Common myeloid progenitor, CD34-positive (primary cell): ENCODE measurements at regions of chr16 and their contacts with region 1.

Region 1: DNA sequence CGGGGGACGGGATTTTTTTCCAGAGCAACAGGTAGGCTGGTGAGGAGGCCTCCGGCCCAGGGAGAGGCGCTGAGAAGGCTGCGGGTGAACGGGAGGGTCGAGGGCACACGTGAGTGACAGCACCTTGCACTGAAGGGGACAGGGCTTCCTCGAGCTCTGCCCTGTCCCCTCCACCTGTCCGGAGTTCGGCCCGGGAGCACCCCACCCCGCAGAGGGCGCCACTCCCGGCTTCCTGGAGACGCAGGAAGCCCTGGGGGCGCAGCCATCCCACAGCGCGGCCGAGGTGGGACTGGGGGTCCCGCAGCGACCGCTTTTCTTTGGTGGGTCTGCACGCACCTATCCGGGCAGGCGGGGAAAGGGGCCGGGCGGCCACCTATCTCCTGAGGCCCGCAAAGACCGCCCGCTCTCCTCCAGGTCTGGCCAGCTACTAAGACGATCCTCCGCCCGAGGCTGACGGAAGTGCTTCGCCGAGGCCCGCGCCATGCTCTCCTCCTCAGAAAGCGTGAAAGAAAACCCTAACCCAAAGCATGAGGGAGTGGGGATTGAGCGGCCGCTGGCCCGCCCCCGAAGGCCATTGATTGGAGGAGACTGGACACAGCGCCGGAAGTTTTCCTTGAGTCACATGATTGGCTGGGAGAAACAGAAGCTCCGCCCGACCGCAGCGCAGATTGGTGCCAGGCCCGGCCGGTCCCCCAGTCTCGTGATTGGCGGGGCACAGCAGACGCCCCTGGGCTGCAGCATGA is 34.3 kb downstream of the DDX19A start:
- DNase-seq: peak; percentile 97 to 98 (median 98)
- H3K4me3 ChIP-seq: peak overlapping the region; percentile 72 to 88 (median 81)
- H3K27ac ChIP-seq: peak overlapping the region; percentile 27 to 74
- H3K4me1 ChIP-seq: peaks cover 7 to 28% (median 25%) of the 10 kb centered on the region in 4 experiments
- H3K27me3 ChIP-seq: no peaks in the 10 kb centered on the region

Region 2: DNA sequence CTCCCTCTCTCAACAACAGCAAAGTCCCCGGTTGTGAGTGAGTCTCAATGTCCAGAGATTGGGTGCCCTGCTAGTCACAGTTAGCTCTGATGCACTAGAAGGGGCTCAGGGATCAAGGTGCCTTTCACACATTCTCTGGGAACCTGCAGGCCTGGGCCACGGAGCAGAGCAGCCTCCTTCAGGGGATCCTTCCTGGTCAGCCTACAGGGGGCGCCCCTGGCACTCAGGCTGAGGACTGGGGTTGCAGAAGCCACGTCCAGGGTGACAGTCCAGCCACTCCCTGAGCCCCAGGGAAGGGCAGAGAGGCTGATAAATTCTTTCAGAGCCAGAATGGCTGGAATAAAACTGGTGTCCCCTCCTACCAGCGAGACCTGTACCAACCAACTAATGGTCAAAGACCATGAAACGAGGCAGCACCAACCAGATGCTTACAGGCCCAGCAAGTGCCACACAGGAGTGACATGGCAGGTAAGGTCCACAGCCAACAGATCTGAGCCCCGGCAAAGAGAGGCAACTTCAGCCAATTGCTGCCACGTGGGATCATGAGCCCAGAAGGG is 14.4 kb after region 1 on chr16:
- CTCF ChIA-PET with region 1: interaction called, 42 read pairs
- POLR2A ChIA-PET with region 1: no interaction called
- DNase-seq: peak; percentile 53 to 67 (median 61)
- H3K4me3 ChIP-seq: no peak overlapping the region
- H3K27ac ChIP-seq: no peak overlapping the region
- H3K4me1 ChIP-seq: no peaks in the 10 kb centered on the region
- H3K27me3 ChIP-seq: no peaks in the 10 kb centered on the region

Region 3: GRCh38 chr16:70454222-70455034 is 73.4 kb after region 1 on chr16 and contains the start of gene FCSK:
- CTCF ChIA-PET with region 1: interaction called, 10 read pairs
- POLR2A ChIA-PET with region 1: no interaction called
- DNase-seq: peak; percentile 73 to 86 (median 76)
- H3K4me3 ChIP-seq: peak within 1 kb of the TSS; percentile 81 to 93 (median 87)
- H3K27ac ChIP-seq: peak within 1 kb of the TSS; percentile 99
- H3K4me1 ChIP-seq: peaks cover 6 to 12% (median 7%) of the 10 kb centered on the region in 4 experiments
- H3K27me3 ChIP-seq: peaks cover 0 to 12% (median 0%) of the 10 kb centered on the region in 5 experiments